Dendritic cell treated with granulocyte-macrophage colony-stimulating factor and Interleukin-4, amounts not matched to agents 40 ng/mL and 50 ng/mL, for 4 days (primary cell): ENCODE measurements at regions of chr16 and their contacts with region 1.

Region 1: GRCh38 chr16:82506692-82507670 is 119.8 kb upstream of the CDH13 start:
- H3K4me3 Mint-ChIP-seq: no peak overlapping the region
- H3K27ac Mint-ChIP-seq: no peak overlapping the region
- H3K4me1 Mint-ChIP-seq: no peaks in the 10 kb centered on the region
- H3K27me3 Mint-ChIP-seq: no peaks in the 10 kb centered on the region

Region 2: DNA sequence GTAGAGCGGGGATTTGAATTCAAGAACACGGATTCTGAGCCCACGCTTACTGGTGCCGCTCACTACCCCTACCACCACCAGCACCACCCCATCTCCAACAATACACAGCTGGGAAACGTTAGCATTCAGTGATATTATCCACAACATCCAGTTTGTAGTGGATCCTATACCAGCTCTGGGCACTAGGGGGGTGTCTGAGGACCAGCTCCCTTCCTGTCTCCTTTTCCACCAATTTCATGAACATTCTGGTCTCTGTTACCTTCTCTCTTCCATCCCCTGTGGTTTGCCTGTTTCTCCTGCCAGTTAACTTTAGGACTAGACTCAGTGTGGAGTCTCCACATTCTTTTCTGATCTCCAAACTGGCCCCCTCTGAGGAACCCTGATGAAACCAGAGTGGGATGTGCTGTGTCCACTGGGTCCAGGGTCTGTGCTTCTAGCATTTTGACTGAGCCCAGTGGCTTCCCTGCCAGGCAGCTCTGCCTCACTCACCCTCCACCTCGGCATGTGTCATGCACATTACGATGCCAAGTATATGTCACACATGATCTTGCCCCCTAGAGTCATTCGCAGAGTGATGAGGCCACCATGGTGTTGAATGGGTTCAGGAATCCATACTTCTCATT is 67.2 kb before region 1 on chr16:
- intact Hi-C with region 1: loop called (anchors 10 kb)
- H3K4me3 Mint-ChIP-seq: no peak overlapping the region
- H3K27ac Mint-ChIP-seq: no peak overlapping the region
- H3K4me1 Mint-ChIP-seq: no peaks in the 10 kb centered on the region
- H3K27me3 Mint-ChIP-seq: peaks cover 2% of the 10 kb centered on the region